ENCODE measurements at regions of chr20 and their contacts with region 1.

Region 1: DNA sequence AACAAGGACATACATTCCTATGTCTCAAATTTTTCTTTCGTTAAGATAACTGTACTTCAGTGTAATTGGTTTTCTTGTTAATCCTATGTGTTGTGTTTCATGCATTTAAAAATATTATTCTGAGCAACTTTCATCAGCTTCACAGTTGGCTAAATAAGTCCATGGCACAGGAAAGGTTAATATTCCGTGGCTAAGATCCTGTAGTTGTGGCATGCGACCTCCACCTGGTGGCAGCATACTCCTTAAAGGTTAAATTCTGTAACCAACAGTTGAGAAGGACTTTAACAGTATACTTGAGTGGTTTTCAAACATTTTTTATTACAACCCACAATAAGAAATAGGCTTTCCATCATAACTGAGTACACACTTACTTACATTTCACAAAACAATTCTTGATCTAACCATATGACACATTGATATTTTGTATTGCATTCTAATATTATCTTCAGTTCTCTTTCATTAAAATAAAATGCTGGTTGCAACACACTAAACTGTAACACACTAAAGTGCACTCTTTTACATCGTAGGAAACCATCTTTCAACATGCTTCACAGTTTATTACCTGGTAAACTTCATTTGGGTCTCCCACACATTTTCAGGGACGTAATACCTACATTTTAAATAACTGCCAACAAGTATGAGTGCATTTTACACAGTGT is 118.3 kb downstream of the SLX4IP start:
- DNase-seq: peak; percentile 15 to 58 (median 28)
- ATAC-seq: peak; percentile 81
- H3K4me3 ChIP-seq: no peak overlapping the region
- H3K27ac ChIP-seq: no peak overlapping the region
- H3K4me1 ChIP-seq: no peaks in the 10 kb centered on the region; a peak in 1 of 5 replicates
- H3K27me3 ChIP-seq: no peaks in the 10 kb centered on the region
- CTCF ChIP-seq: peak; percentile 50 to 66 (median 62); a peak in 5 of 6 replicates
- EP300 ChIP-seq: no peak
- POLR2A ChIP-seq: no peak
- RAD21 ChIP-seq: peak; percentile 58 to 78

Region 2: GRCh38 chr20:10115021-10115420 is 438.4 kb before region 1 on chr20:
- CTCF ChIA-PET with region 1: no interaction called
- POLR2A ChIA-PET with region 1: no interaction called
- in situ Hi-C with region 1: no loop called
- intact Hi-C with region 1: no loop called
- DNase-seq: no peak
- ATAC-seq: no peak
- H3K4me3 ChIP-seq: no peak overlapping the region
- H3K27ac ChIP-seq: no peak overlapping the region
- H3K4me1 ChIP-seq: no peaks in the 10 kb centered on the region
- H3K27me3 ChIP-seq: no peaks in the 10 kb centered on the region
- CTCF ChIP-seq: no peak
- EP300 ChIP-seq: no peak
- POLR2A ChIP-seq: no peak
- RAD21 ChIP-seq: no peak

Region 3: GRCh38 chr20:10282979-10283456 is 270.4 kb before region 1 on chr20:
- CTCF ChIA-PET with region 1: no interaction called
- POLR2A ChIA-PET with region 1: no interaction called
- in situ Hi-C with region 1: no loop called
- intact Hi-C with region 1: no loop called
- DNase-seq: no peak
- ATAC-seq: no peak
- H3K4me3 ChIP-seq: no peak overlapping the region
- H3K27ac ChIP-seq: no peak overlapping the region
- H3K4me1 ChIP-seq: no peaks in the 10 kb centered on the region
- H3K27me3 ChIP-seq: no peaks in the 10 kb centered on the region
- CTCF ChIP-seq: no peak
- EP300 ChIP-seq: no peak
- POLR2A ChIP-seq: no peak
- RAD21 ChIP-seq: no peak

Region 4: GRCh38 chr20:10647465-10647864 is 94.0 kb after region 1 on chr20:
- CTCF ChIA-PET with region 1: no interaction called
- POLR2A ChIA-PET with region 1: no interaction called
- in situ Hi-C with region 1: no loop called
- intact Hi-C with region 1: loop called (anchors 5 kb)
- DNase-seq: peak; percentile 11 to 18 (median 14)
- ATAC-seq: peak; percentile 86
- H3K4me3 ChIP-seq: no peak overlapping the region
- H3K27ac ChIP-seq: no peak overlapping the region
- H3K4me1 ChIP-seq: no peaks in the 10 kb centered on the region
- H3K27me3 ChIP-seq: peaks cover 3 to 21% of the 10 kb centered on the region in 2 experiments; a peak in 2 of 5 replicates
- CTCF ChIP-seq: peak; percentile 36 to 49 (median 46); a peak in 5 of 6 replicates
- EP300 ChIP-seq: no peak
- POLR2A ChIP-seq: no peak
- RAD21 ChIP-seq: peak in 1 of 2 experiments; percentile 41; a peak in 2 of 4 replicates